CD14-positive monocyte (primary cell): ENCODE measurements at regions of chr3 and their contacts with region 1.

Region 1: DNA sequence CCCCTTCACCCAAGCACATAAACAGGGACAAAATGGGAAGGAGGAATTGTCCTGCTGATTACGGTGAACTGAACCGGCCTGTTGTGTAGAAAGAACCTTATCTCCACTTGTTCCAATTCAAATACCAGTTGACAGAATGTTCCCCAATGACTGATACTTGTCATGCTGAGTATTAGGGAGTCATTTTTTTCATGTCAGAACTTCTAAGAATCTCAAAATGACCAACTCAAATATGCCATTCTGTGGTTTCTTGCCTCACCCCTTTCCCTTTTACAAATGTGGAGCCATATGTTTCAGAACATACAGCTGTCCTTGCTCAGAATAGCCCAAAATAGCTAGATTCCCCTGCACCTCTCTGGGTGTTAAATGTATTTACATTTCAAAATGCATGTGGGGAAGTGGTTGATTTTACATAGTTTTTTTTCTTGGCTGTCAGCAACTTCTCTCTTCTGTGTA is 405.9 kb upstream of the TBL1XR1 start:
- DNase-seq: peak; percentile 24 to 40 (median 25)
- H3K4me3 ChIP-seq: peak overlapping the region in 1 of 3 experiments; percentile 15
- H3K4me3 Mint-ChIP-seq: peak overlapping the region in 1 of 2 donors; percentile 58
- H3K27ac ChIP-seq: peak overlapping the region in 1 of 2 donors; percentile 42
- H3K27ac Mint-ChIP-seq: peak overlapping the region in 6 of 7 donors; percentile 61 to 93 (median 75)
- H3K4me1 ChIP-seq: peaks cover 55 to 60% of the 10 kb centered on the region in 2 donors
- H3K4me1 Mint-ChIP-seq: peaks cover 56% of the 10 kb centered on the region
- H3K27me3 ChIP-seq: no peaks in the 10 kb centered on the region
- H3K27me3 Mint-ChIP-seq: peaks cover 0 to 8% (median 2%) of the 10 kb centered on the region in 3 donors
- CTCF ChIP-seq: no peak

Region 2: GRCh38 chr3:177448987-177449975 is 153.9 kb before region 1 on chr3:
- intact Hi-C with region 1: loop called in 1 of 2 experiments (anchors 10 kb)
- DNase-seq: peak; percentile 68 to 93 (median 82)
- H3K4me3 ChIP-seq: peak overlapping the region in 1 of 3 experiments; percentile 17
- H3K4me3 Mint-ChIP-seq: peak overlapping the region in 1 of 2 donors; percentile 81
- H3K27ac ChIP-seq: peak overlapping the region; percentile 24 to 62
- H3K27ac Mint-ChIP-seq: peak overlapping the region; percentile 83 to 94 (median 86)
- H3K4me1 ChIP-seq: peaks cover 64 to 81% of the 10 kb centered on the region in 2 donors
- H3K4me1 Mint-ChIP-seq: peaks cover 28% of the 10 kb centered on the region
- H3K27me3 ChIP-seq: no peaks in the 10 kb centered on the region
- H3K27me3 Mint-ChIP-seq: no peaks in the 10 kb centered on the region
- CTCF ChIP-seq: no peak

Region 3: DNA sequence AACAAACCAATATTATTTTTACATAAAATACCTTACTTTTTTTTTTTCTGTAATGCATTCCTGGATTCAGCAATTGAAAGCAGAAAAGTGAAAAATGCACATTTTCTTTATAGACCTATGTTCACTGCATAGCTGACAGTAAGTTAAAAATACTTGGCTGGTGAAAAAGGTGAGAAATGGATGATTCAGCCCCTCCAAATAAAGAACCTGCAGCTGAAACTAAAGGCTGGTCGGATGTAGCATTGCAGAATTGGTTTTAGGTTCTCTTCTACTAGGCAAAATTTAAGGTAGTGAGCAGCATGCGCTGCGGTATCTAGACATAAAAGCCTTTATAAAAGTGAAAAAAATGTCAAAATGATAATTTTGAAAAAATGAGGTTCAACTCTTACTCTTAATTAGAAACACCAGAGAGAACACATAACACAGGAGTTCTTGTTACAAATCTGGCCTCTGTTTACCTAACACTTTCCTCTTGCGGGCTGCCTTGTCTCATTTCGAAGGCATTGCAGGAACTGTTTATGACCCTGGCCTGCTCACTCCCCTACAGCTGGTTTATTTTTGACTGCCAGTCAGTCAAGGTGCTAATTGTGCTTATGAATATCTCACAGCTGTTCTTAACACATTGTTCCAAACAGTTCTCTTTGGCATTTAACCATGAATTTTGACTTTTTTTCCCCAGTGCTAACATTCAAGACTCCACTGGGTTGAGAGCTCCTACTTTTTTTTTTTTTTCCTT is 49.5 kb after region 1 on chr3:
- intact Hi-C with region 1: no loop called
- DNase-seq: no peak
- H3K4me3 ChIP-seq: no peak overlapping the region
- H3K4me3 Mint-ChIP-seq: no peak overlapping the region
- H3K27ac ChIP-seq: no peak overlapping the region
- H3K27ac Mint-ChIP-seq: no peak overlapping the region
- H3K4me1 ChIP-seq: peaks cover 1 to 2% of the 10 kb centered on the region in 2 donors
- H3K4me1 Mint-ChIP-seq: peaks cover 3% of the 10 kb centered on the region
- H3K27me3 ChIP-seq: no peaks in the 10 kb centered on the region
- H3K27me3 Mint-ChIP-seq: peaks cover 0 to 3% (median 0%) of the 10 kb centered on the region in 3 donors
- CTCF ChIP-seq: no peak